A549 (cell line): ENCODE measurements at regions of chr5 and their contacts with region 1.

Region 1: GRCh38 chr5:74648835-74649293 is 8.3 kb upstream of the ENC1 start:
- DNase-seq: peak; percentile 65 to 77
- ATAC-seq: peak; percentile 88 to 96
- H3K4me3 ChIP-seq: no peak overlapping the region
- H3K27ac ChIP-seq: peak overlapping the region in 1 of 2 experiments; percentile 43; a peak in 3 of 6 replicates
- H3K4me1 ChIP-seq: peaks cover 16% of the 10 kb centered on the region
- CTCF ChIP-seq: peak; percentile 95
- EP300 ChIP-seq: no peak
- POLR2A ChIP-seq: no peak
- RAD21 ChIP-seq: peak; percentile 95 to 97

Region 2: GRCh38 chr5:73918791-73919221 is 730.1 kb before region 1 on chr5:
- CTCF ChIA-PET with region 1: interaction called, 10 read pairs
- POLR2A ChIA-PET with region 1: no interaction called
- DNase-seq: no peak
- ATAC-seq: no peak
- H3K4me3 ChIP-seq: no peak overlapping the region
- H3K27ac ChIP-seq: no peak overlapping the region
- H3K4me1 ChIP-seq: no peaks in the 10 kb centered on the region
- CTCF ChIP-seq: no peak
- EP300 ChIP-seq: no peak
- POLR2A ChIP-seq: no peak
- RAD21 ChIP-seq: no peak

Region 3: GRCh38 chr5:74567461-74567860 is 81.4 kb before region 1 on chr5:
- CTCF ChIA-PET with region 1: no interaction called
- POLR2A ChIA-PET with region 1: no interaction called
- DNase-seq: no peak
- ATAC-seq: no peak
- H3K4me3 ChIP-seq: no peak overlapping the region
- H3K27ac ChIP-seq: no peak overlapping the region
- H3K4me1 ChIP-seq: no peaks in the 10 kb centered on the region
- CTCF ChIP-seq: no peak
- EP300 ChIP-seq: no peak
- POLR2A ChIP-seq: no peak
- RAD21 ChIP-seq: no peak

Region 4: DNA sequence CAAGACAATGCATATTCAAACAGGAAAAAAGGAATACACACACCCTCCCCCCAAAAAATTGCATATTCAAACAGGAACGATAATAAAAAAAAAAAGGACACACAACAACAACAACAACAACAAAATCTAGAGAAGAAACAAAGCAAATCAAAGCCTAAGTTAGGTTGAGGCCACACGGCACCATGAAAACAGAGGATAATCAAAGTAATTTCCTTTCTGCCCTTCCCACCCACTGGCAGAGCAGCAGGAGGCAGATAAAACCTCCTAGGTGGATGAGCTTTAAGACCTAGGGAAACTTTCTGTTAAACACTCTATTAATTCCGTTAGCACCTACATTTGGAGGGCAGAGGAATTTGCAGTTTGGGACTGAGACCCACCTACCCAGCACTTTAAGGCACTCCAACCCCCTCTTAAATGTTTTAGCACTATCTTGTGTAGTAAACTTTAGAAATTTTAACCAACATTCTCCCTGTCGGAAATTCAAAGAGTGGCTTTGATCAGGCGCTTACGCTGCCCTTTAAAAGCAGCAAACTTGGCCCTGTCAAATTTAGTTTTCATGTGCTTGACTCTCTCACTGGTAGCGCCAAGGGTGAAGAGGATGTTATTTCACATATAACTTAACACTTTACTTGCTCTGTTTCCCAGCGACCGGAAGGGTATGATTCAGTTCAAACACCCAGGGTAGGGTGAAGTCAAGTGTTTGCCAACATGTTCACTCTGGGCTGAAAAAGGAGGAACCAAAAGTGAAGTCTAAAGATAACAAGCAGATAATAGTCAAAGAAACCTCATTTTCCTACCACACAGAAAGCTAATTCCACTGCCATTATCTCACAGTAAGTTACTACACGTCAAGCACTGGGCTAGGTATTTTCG is 17.5 kb before region 1 on chr5:
- CTCF ChIA-PET with region 1: no interaction called
- POLR2A ChIA-PET with region 1: no interaction called
- DNase-seq: peak; percentile 57 to 78
- ATAC-seq: peak; percentile 81 to 88
- H3K4me3 ChIP-seq: peak overlapping the region; percentile 18
- H3K27ac ChIP-seq: peak overlapping the region; percentile 78 to 88
- H3K4me1 ChIP-seq: peaks cover 62% of the 10 kb centered on the region
- CTCF ChIP-seq: no peak
- EP300 ChIP-seq: no peak; a peak in 1 of 5 replicates
- POLR2A ChIP-seq: no peak
- RAD21 ChIP-seq: no peak; a peak in 1 of 5 replicates

Region 5: DNA sequence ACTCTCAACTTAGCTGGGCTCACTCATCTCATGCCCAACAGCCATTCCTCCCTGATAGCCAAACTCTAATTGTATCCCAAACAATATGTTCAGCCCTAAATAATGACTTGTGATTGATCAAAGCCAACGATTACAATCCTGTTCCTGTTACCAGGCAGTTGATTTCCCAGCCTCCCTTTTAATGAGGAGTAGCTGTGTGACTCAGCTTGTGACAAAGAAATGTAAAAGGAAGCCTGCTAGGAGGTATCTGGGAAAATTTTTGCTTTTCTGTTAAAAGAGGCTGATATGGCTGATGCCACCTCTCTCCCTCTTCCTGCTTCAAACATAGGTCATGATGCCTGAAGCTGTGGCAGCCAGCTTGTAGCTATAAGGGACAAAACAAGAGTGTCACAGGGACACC is 11.3 kb after region 1 on chr5:
- CTCF ChIA-PET with region 1: interaction called, 22 read pairs
- POLR2A ChIA-PET with region 1: no interaction called
- DNase-seq: no peak
- ATAC-seq: no peak
- H3K4me3 ChIP-seq: no peak overlapping the region
- H3K27ac ChIP-seq: no peak overlapping the region
- H3K4me1 ChIP-seq: no peaks in the 10 kb centered on the region
- CTCF ChIP-seq: no peak
- EP300 ChIP-seq: no peak
- POLR2A ChIP-seq: no peak
- RAD21 ChIP-seq: no peak

Region 6: DNA sequence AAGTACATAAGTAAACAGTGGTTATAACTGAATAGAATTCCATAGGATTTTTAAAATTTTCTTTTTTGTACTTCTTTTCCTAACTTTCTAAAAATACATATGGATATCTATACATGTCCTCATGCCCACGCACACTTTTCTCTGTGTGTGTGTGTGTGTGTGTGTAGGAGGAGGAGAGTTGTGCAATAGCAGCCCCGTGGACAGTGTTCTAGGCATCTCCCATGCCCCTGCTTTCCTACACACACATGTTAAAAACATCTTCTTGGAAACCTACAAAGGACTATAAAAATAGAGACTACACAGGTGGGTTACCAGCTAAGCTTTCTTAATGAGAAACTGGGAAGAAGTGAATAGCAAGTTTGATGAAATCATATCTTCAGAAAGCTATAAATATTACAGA is 16.4 kb after region 1 on chr5:
- CTCF ChIA-PET with region 1: interaction called, 22 read pairs
- POLR2A ChIA-PET with region 1: no interaction called
- DNase-seq: no peak
- ATAC-seq: no peak
- H3K4me3 ChIP-seq: no peak overlapping the region
- H3K27ac ChIP-seq: no peak overlapping the region
- H3K4me1 ChIP-seq: no peaks in the 10 kb centered on the region
- CTCF ChIP-seq: no peak
- EP300 ChIP-seq: no peak
- POLR2A ChIP-seq: no peak
- RAD21 ChIP-seq: no peak